RWPE1 (cell line): ENCODE measurements at regions of chr11 and their contacts with region 1.

Region 1: DNA sequence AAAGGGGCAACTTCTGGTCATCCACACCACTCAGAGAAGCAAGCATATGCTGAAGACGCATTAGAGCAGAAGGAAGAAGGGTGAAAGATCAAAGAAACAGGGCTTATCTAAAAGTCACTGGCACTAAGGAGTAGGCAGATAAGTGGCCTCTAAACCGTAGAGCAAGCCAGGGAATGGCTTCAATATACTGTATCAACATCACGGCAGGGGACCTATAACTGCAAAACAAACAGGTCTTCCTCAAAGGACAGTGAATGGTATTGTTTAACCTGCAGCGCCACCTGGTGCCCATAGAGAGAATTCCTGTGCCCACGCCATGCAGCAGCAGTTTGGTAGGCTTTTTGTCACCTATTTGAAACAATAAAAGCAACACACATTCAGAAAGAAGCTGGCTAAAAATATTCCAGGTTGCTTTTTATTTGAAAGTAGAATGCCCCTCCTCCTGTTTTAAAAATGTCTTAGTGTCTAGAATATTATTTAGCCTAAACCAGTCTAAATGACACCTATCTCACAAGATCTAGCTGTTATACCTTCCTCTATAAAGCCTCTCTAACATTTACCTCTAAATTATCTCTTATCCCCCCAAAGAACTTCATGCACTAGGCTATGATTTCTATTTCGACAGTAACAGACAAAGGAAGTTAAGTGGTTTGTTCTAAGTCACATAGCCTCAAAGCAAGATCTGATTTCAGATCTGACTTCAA is 21.8 kb downstream of the SNX19 start:
- DNase-seq: peak; percentile 35
- H3K27ac ChIP-seq: no peak overlapping the region
- CTCF ChIP-seq: peak; percentile 87

Region 2: GRCh38 chr11:130434521-130435223 is 459.8 kb before region 1 on chr11:
- CTCF ChIA-PET with region 1: interaction called, 17 read pairs
- POLR2A ChIA-PET with region 1: no interaction called
- DNase-seq: peak; percentile 77
- H3K27ac ChIP-seq: peak overlapping the region; percentile 65
- CTCF ChIP-seq: peak; percentile 90

Region 3: DNA sequence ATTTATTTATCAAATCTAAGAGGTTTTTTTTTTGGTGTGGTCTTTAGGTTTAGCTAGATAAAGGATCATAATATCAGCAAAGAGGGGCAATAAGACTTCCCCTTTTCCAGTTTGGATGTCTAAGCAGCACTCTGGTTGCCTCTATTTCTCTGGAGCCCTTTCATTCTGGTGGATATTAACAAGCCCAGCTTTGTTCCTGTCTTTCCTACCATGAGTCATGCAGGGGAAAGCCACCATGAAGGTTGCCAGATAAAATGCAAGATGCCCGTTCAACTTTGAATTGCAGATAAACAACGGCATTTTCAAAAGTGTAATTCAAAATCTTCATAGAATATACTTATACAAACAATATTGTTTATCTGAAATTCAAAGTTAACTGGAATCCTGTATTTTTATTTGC is 302.4 kb before region 1 on chr11:
- CTCF ChIA-PET with region 1: no interaction called
- POLR2A ChIA-PET with region 1: no interaction called
- DNase-seq: peak; percentile 52
- H3K27ac ChIP-seq: no peak overlapping the region
- CTCF ChIP-seq: no peak

Region 4: GRCh38 chr11:130671801-130672700 is 222.4 kb before region 1 on chr11:
- CTCF ChIA-PET with region 1: no interaction called
- POLR2A ChIA-PET with region 1: no interaction called
- DNase-seq: no peak
- H3K27ac ChIP-seq: peak overlapping the region; percentile 37
- CTCF ChIP-seq: no peak